ENCODE measurements at regions of chr22 and their contacts with region 1.

Region 1: GRCh38 chr22:18024276-18024947 is at the start of gene MICAL3:
- DNase-seq: no peak
- H3K4me3 ChIP-seq: peak within 1 kb of the TSS; percentile 67
- H3K27me3 ChIP-seq: no peaks in the 10 kb centered on the region
- CTCF ChIP-seq: peak; percentile 61
- polyA plus RNA-seq, gene MICAL3: 13.4 and 16.4 TPM in 2 replicates

Region 2: GRCh38 chr22:17910561-17911311 is 113.7 kb before region 1 on chr22:
- CTCF ChIA-PET with region 1: interaction called, 13 read pairs
- POLR2A ChIA-PET with region 1: no interaction called
- DNase-seq: peak; percentile 46
- H3K4me3 ChIP-seq: no peak overlapping the region
- H3K27me3 ChIP-seq: no peaks in the 10 kb centered on the region
- CTCF ChIP-seq: peak; percentile 58

Region 3: GRCh38 chr22:17945888-17946648 is 78.3 kb before region 1 on chr22:
- CTCF ChIA-PET with region 1: no interaction called
- POLR2A ChIA-PET with region 1: no interaction called
- DNase-seq: no peak
- H3K4me3 ChIP-seq: no peak overlapping the region
- H3K27me3 ChIP-seq: no peaks in the 10 kb centered on the region
- CTCF ChIP-seq: no peak

Region 4: GRCh38 chr22:18012531-18012930 is 11.9 kb before region 1 on chr22:
- CTCF ChIA-PET with region 1: interaction called, 15 read pairs
- POLR2A ChIA-PET with region 1: no interaction called
- DNase-seq: no peak
- H3K4me3 ChIP-seq: no peak overlapping the region
- H3K27me3 ChIP-seq: no peaks in the 10 kb centered on the region
- CTCF ChIP-seq: no peak

Region 5: DNA sequence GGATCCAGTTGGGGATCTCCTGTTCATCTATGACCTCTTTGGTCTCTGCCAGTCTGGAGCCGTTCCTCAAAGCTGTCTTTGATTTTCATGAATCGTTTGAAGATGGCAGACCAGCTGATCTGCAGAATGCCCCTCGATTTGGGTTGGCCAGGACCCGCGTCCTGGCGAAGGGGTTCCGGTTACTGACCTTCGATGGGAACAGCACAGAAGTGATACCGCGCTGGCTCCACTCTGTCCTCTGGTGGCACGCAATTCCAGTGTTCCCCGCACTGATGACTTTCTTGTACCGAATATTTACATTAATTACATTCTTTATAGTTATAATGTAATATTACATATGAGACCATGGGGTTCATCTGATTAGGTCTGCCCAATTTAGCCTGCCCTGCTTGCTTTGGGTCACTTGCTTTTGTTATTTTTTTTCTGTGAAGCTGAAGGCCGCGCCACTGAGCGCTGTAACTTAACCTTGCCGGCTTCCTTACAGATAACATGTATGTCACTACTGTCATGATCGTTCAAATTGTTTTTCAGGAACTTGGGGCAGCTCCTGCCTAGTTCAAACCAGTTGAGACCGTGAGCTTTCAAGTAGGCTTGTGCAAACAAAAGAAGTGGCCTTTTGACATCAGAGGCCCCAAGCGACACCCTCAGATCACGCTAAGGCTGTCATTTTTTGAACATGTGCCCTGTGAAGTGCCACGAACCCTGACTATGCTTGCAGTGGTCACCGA is 121.4 kb after region 1 on chr22:
- CTCF ChIA-PET with region 1: no interaction called
- POLR2A ChIA-PET with region 1: no interaction called
- DNase-seq: no peak
- H3K4me3 ChIP-seq: no peak overlapping the region
- H3K27me3 ChIP-seq: no peaks in the 10 kb centered on the region
- CTCF ChIP-seq: no peak

Measured in BJ (cell line).